Heart right ventricle (tissue), 16 donors: ENCODE measurements at regions of chr10 and their contacts with region 1.

Region 1: GRCh38 chr10:97016728-97017473 is 168.9 kb downstream of the SLIT1 start:
- DNase-seq: no peak
- ATAC-seq: no peak
- H3K4me3 ChIP-seq: no peak overlapping the region
- H3K27ac ChIP-seq: no peak overlapping the region
- H3K4me1 ChIP-seq: peaks cover 0 to 21% (median 14%) of the 10 kb centered on the region in 9 donors
- H3K27me3 ChIP-seq: no peaks in the 10 kb centered on the region
- CTCF ChIP-seq: no peak

Region 2: DNA sequence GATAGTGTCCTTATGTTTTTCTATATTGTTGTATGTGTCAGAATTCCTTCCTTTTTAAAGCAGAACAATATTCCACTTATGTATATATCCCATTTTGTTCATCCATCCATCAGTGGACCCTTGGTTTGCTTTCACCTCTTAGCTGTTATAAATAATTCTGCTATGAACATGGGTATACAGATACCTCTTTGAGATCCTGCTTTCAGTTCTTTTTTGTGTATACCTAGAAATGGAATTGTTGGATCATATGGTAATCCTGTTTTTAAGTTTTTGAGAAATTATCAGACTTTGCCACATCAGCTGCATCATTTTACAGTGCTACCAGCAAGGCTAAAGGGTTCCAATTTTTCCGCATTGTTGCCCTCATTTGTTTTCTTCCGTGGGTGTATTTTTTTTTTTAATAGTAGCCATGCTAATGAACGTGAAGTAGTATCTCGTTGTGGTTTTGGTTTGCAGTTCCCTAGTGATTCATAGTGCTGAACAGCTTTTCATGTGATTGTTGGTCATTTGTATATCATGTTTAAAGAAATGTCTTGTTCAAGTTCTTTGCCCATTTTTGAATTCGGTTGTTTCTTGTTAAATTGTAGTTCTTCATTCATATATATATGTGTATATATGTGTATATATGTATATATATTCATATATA is 97.0 kb before region 1 on chr10:
- intact Hi-C with region 1: loop called in 3 of 10 experiments (anchors 5 to 10 kb)
- DNase-seq: no peak
- ATAC-seq: no peak
- H3K4me3 ChIP-seq: no peak overlapping the region
- H3K27ac ChIP-seq: peak overlapping the region in 2 of 10 donors; percentile 45 to 52
- H3K4me1 ChIP-seq: peaks cover 0 to 58% (median 29%) of the 10 kb centered on the region in 9 donors
- H3K27me3 ChIP-seq: no peaks in the 10 kb centered on the region
- CTCF ChIP-seq: no peak